PC-3 (cell line): ENCODE measurements at regions of chr12 and their contacts with region 1.

Region 1: DNA sequence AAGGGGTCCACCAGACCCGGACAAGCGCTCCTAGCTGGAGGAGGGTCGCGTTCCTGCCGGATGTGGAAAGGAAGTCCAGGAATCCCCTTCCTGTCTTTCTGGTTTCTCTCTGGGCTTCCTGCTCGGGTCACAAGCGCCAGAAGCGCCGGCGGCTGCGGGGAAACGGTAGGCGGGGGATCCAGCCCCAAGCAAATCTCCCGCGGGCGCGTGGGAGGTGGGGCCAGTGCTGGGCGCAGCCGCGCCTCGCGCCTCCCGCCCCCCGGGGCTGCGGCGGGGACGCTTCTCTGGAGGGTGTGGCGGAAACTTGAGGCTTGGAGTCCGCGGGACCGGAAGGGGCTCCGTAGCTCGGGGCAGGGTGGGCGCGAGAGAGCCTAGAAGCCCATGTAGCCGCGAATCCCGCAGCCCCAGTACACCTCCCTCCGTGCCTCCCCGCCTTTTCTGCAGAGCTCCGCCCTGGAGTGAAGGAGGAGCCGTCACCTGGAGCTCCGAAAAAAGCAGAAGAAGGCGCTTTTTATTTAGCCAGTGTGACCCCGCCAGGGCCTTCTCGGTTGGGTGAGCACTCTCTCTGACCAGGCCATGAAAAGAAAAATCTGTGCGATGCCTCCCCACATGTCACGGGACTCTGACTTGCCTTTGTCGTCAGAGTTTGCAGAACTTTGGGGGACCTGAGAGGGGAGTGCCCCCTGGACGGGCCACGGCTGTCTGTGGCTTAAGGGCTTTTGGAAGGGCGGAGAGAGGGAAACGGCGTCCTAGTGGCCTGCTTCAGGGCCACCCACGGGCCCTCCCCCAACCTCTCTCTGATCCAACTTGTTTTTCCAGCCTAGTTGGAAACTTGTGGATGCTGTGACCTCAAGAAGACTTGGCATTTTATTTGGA is 21.4 kb upstream of the CLEC2D start:
- DNase-seq: peak; percentile 81
- ATAC-seq: peak; percentile 69
- H3K4me3 ChIP-seq: peak overlapping the region; percentile 77
- H3K27ac ChIP-seq: peak overlapping the region; percentile 87
- H3K4me1 ChIP-seq: peaks cover 28% of the 10 kb centered on the region
- H3K27me3 ChIP-seq: no peaks in the 10 kb centered on the region
- CTCF ChIP-seq: no peak

Region 2: DNA sequence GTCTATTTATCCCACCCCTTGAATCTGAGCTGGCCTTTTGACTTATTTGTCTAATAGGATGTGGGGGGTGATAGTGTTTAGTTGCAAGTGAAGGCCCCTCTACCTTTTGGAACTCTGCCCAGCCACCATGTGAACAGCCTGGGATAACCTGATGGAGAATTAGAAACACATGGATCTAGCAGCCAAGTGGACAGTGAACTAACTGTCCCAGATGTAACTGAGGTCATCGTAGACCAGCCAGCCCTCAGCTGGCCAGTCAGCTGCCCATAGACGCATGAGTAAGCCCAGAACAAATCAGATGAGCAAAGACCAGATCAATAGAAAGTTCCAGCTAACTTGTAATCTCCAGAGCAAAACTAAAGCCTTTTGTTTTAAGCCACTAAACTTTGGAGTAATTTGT is 59.3 kb before region 1 on chr12:
- CTCF ChIA-PET with region 1: no interaction called
- POLR2A ChIA-PET with region 1: no interaction called
- intact Hi-C with region 1: no loop called
- DNase-seq: no peak
- ATAC-seq: no peak
- H3K4me3 ChIP-seq: no peak overlapping the region
- H3K27ac ChIP-seq: no peak overlapping the region
- H3K4me1 ChIP-seq: no peaks in the 10 kb centered on the region
- H3K27me3 ChIP-seq: no peaks in the 10 kb centered on the region
- CTCF ChIP-seq: no peak

Region 3: GRCh38 chr12:9673404-9674225 is 25.6 kb after region 1 on chr12:
- CTCF ChIA-PET with region 1: no interaction called
- POLR2A ChIA-PET with region 1: no interaction called
- intact Hi-C with region 1: no loop called
- DNase-seq: peak; percentile 80
- ATAC-seq: peak; percentile 97
- H3K4me3 ChIP-seq: no peak overlapping the region; the same call in 1 of the 2 replicates
- H3K27ac ChIP-seq: peak overlapping the region; percentile 66
- H3K4me1 ChIP-seq: peaks cover 18% of the 10 kb centered on the region
- H3K27me3 ChIP-seq: no peaks in the 10 kb centered on the region
- CTCF ChIP-seq: no peak

Region 4: GRCh38 chr12:9707864-9708808 is 60.1 kb after region 1 on chr12:
- CTCF ChIA-PET with region 1: no interaction called
- POLR2A ChIA-PET with region 1: no interaction called
- intact Hi-C with region 1: loop called (anchors 5 kb)
- DNase-seq: peak; percentile 61
- ATAC-seq: peak; percentile 66
- H3K4me3 ChIP-seq: no peak overlapping the region
- H3K27ac ChIP-seq: no peak overlapping the region
- H3K4me1 ChIP-seq: peaks cover 12% of the 10 kb centered on the region
- H3K27me3 ChIP-seq: no peaks in the 10 kb centered on the region
- CTCF ChIP-seq: peak; percentile 77

Region 5: DNA sequence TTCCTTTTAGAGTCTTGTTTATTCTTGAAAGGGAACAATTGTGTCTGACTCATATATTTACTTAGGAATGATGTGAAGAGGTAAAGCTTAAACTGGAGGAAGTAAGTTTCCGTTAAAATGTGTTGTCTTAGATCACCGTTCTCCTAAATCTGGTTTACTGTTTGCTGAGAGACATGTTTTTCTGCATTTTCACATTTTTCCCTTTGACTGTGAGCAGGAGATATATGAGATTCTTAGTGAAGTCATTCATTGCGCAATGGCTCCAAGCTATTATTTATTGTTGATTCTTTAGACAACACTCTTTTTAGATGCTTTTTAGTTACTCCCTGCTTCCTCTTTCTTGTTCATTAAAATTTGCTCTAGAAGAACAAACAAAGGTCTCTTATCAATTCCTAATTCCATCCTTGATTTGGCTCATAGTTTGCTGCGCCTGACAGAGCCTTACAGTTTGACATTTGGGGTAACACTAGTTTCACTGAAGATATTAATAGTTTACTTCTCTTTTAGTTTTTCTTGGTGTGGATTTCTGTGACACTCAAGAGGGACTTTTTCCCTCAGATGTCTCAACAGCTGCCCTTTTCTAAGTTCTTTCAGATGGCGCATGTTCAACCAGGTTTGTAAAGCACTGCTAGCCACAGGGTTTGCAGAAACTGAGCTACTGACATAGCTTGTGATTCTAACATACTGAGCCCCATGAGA is 73.5 kb after region 1 on chr12:
- CTCF ChIA-PET with region 1: no interaction called
- POLR2A ChIA-PET with region 1: no interaction called
- intact Hi-C with region 1: loop called (anchors 5 kb)
- DNase-seq: peak; percentile 86
- ATAC-seq: peak; percentile 88
- H3K4me3 ChIP-seq: peak overlapping the region; percentile 41; the same call in 1 of the 2 replicates
- H3K27ac ChIP-seq: peak overlapping the region; percentile 83
- H3K4me1 ChIP-seq: peaks cover 21% of the 10 kb centered on the region
- H3K27me3 ChIP-seq: no peaks in the 10 kb centered on the region
- CTCF ChIP-seq: no peak

Region 6: GRCh38 chr12:10212201-10213131 is 564.4 kb after region 1 on chr12 and contains the start of gene GABARAPL1:
- CTCF ChIA-PET with region 1: no interaction called
- POLR2A ChIA-PET with region 1: no interaction called
- intact Hi-C with region 1: no loop called
- DNase-seq: peak; percentile 95
- ATAC-seq: peak; percentile 87
- H3K4me3 ChIP-seq: peak within 1 kb of the TSS; percentile 92
- H3K27ac ChIP-seq: peak within 1 kb of the TSS; percentile 84
- H3K4me1 ChIP-seq: peaks cover 10% of the 10 kb centered on the region; the same call in 1 of the 2 replicates
- H3K27me3 ChIP-seq: no peaks in the 10 kb centered on the region
- CTCF ChIP-seq: no peak
- total RNA-seq, gene GABARAPL1: 14.9 and 24.5 TPM in 2 replicates